ENCODE measurements at regions of chr1 and their contacts with region 1.

Region 1: DNA sequence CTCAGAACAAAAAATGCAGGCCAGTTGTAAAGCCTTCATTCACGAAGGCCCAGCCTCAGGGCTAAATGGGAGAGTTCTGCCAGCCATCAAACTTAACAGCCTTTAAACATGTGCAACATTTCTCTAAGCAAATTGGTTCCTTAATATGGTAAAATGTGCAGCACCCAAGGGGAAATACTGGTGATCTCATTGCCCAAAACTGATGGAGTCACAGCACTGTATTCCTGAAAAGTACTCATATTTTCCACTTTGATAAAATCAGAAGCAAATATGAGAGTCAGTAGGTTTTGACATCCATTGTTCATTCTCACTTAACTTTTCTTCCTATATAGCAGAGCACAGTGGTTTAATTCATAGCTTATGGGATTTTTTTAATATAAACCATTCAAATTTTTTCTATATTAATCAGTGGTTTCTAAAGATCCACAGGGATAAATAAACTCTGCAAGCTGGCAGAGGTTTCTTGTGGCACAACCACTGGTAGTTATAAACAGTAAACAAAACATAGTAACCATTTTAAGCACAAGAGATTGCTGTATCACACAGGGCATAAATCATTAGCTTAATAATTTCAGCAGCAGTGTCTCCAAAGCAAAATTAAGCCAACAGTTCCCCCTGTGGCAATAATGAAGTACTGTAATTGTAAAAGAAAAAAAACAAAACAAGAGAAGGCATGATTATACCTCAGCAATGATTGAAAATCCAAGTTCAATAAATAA is 106.9 kb upstream of the LYPLAL1 start:
- DNase-seq: no peak
- ATAC-seq: peak; percentile 57 to 65
- H3K4me3 ChIP-seq: no peak overlapping the region
- H3K27ac ChIP-seq: no peak overlapping the region
- H3K4me1 ChIP-seq: no peaks in the 10 kb centered on the region
- H3K27me3 ChIP-seq: no peaks in the 10 kb centered on the region
- CTCF ChIP-seq: peak; percentile 54

Region 2: GRCh38 chr1:218330043-218330623 is 736.7 kb before region 1 on chr1:
- intact Hi-C with region 1: loop called (anchors 10 kb)
- DNase-seq: no peak
- ATAC-seq: peak; percentile 48 to 68
- H3K4me3 ChIP-seq: no peak overlapping the region
- H3K27ac ChIP-seq: no peak overlapping the region
- H3K4me1 ChIP-seq: no peaks in the 10 kb centered on the region
- H3K27me3 ChIP-seq: no peaks in the 10 kb centered on the region
- CTCF ChIP-seq: peak; percentile 73

Measured in lower lobe of right lung (tissue), 2 donors.